ENCODE measurements at regions of chr10 and their contacts with region 1.

Region 1: DNA sequence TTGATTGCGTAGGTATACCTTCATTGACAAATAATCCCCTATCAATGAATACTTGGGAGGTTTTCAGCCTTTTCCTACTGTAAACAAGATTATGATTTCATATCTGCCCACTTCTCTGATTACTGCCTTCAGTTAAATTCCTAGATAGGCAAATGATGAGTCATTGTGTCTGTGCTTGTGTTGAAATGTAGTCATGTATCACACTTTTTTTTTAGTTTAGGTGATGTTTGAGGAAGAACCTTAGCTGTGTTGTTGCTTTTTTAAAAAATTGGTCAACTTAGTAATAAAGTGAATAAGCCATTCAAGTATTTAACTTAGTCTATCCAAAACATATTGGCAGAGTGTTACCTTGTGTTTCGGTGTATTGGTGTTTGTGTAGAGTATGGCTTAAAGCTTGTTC is 60.0 kb downstream of the WAC start:
- DNase-seq: no peak
- ATAC-seq: peak; percentile 33
- H3K4me3 ChIP-seq: no peak overlapping the region
- H3K4me1 ChIP-seq: peaks cover 3% of the 10 kb centered on the region
- CTCF ChIP-seq: no peak

Region 2: GRCh38 chr10:28432210-28432676 is 160.7 kb before region 1 on chr10:
- intact Hi-C with region 1: loop called in 1 of 2 experiments (anchors 10 kb)
- DNase-seq: peak in 2 of 3 donors; percentile 34 to 60
- ATAC-seq: peak; percentile 96
- H3K4me3 ChIP-seq: no peak overlapping the region
- H3K4me1 ChIP-seq: no peaks in the 10 kb centered on the region
- CTCF ChIP-seq: peak; percentile 62

Measured in mucosa of descending colon (tissue), 3 donors.